Ovary (tissue), 10 donors: ENCODE measurements at regions of chr11 and their contacts with region 1.

Region 1: DNA sequence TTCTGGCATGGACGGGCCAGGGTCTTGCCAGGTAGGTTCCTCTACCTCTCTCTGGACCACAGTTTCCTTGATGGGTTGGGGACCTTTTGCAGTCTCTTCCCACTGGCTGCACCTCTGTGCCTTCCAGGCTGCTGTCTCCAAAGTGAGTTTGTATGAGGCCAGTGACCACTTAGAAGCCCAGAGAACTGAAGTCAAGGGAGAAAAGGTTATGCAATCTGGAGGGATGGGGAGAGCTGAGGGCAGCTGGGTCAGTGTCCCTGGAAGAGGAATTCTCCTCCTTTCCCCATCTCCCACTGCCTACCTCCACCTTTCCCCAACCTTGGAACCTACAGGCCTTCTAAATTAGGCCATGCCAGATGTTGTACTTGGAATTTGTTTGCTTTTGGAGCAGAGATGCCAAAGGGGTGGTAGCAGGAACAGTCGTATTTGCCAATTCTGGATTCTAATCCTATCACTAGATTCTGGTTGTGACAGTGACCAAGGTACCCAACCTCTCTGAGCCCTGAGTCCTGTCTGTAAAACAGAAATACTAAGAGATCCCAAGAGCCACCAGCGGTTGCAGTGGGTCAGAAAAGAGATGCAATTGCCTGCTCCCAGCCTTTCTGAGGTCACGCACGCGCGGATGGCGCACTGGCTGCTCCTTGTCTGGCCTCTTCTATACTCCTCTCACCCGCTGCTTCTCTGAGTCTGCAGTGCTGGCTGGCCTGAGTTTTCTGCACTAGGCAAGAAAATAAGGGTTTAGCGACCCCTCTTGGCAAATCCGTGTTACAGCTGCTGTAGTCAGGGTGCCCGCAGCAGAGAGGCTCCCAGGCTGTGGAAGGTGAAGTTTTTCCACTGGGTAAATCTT is 10.7 kb upstream of the ACCSL start:
- DNase-seq: peak; percentile 86 to 94 (median 89)
- H3K4me3 ChIP-seq: no peak overlapping the region
- H3K27ac ChIP-seq: peak overlapping the region; percentile 50 to 78
- H3K4me1 ChIP-seq: peaks cover 3% of the 10 kb centered on the region
- H3K27me3 ChIP-seq: no peaks in the 10 kb centered on the region
- CTCF ChIP-seq: peak; percentile 92 to 97 (median 93)
- EP300 ChIP-seq: no peak
- POLR2A ChIP-seq: peak; percentile 43

Region 2: DNA sequence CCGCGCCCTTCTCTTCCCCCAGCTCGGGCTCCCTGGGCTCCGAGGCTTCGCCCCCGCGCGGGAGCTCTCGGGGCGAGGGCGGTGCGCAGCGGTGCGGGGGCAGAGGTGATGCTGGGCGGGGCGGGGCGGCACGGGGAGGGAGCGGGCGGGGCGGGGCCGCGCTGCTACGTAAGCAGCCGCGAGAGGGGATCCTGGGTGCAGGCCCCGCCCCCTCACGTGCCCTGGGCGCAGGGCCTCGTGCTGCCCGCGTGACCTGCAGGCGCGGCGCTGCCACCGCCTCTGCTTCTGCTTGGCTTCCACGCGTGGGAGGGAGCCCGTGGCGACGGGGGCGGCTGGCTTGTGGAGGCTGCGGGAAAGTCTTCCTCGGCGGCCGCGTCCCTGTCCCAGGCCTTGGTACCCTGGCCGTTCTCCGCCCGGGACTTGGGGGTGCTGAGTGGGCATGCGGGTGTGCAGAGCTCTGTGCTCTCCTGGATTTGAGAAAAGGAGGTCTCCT is 489.1 kb before region 1 on chr11:
- intact Hi-C with region 1: loop called in 1 of 4 experiments (anchors 10 kb)
- DNase-seq: peak; percentile 88 to 92 (median 91)
- H3K4me3 ChIP-seq: peak overlapping the region; percentile 36
- H3K27ac ChIP-seq: peak overlapping the region; percentile 71 to 85
- H3K4me1 ChIP-seq: peaks cover 6% of the 10 kb centered on the region
- H3K27me3 ChIP-seq: no peaks in the 10 kb centered on the region
- CTCF ChIP-seq: no peak
- EP300 ChIP-seq: no peak
- POLR2A ChIP-seq: no peak

Region 3: GRCh38 chr11:43895601-43896000 is 141.4 kb before region 1 on chr11:
- intact Hi-C with region 1: loop called (anchors 2 kb)
- DNase-seq: no peak
- H3K4me3 ChIP-seq: no peak overlapping the region
- H3K27ac ChIP-seq: no peak overlapping the region
- H3K4me1 ChIP-seq: no peaks in the 10 kb centered on the region
- H3K27me3 ChIP-seq: no peaks in the 10 kb centered on the region
- CTCF ChIP-seq: no peak
- EP300 ChIP-seq: no peak
- POLR2A ChIP-seq: no peak

Region 4: DNA sequence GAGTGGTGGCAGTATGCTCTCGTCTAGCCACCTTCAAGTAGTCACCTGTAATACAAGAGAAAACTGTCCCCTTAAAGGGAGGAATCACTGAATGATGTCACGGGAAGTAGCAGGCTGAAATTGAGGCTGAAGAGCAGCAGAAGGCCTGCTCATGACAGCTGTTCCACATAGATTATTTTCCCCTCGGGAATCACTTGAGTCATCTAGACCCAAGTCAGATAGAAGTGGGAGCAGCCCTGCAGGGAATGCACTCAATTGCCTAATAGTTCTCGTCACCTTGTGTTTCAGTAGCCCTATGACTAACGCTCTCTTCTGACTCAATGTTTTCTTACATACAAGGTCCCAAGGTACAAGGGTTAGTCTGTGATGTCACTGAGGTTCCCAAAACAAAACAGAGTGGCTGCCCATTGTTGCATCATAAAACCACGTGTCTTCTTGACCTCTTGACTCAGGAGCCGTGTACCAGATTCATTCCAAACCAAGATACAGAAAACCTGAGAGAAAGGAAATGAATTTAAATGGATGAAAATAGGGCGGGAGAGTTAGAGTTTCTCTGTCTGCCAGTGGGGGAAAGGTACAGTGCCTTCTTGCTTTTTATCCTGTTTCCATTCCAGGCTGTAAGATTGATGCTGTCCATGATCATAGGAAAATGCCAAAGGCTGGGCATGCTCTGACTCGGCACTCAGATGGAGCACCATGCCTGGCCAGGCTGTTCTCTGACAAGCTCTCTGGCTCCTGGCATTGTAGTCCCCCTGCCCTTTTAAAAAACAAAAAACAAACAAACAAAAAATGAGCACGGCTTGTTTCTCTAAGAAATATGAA is 116.2 kb before region 1 on chr11:
- intact Hi-C with region 1: no loop called
- DNase-seq: peak; percentile 69 to 90 (median 75)
- H3K4me3 ChIP-seq: no peak overlapping the region
- H3K27ac ChIP-seq: peak overlapping the region; percentile 93 to 96
- H3K4me1 ChIP-seq: peaks cover 47% of the 10 kb centered on the region
- H3K27me3 ChIP-seq: no peaks in the 10 kb centered on the region
- CTCF ChIP-seq: no peak
- EP300 ChIP-seq: peak; percentile 100
- POLR2A ChIP-seq: no peak

Region 5: GRCh38 chr11:44143943-44144909 is 107.2 kb after region 1 on chr11:
- intact Hi-C with region 1: no loop called
- DNase-seq: no peak
- H3K4me3 ChIP-seq: no peak overlapping the region
- H3K27ac ChIP-seq: no peak overlapping the region
- H3K4me1 ChIP-seq: peaks cover 2% of the 10 kb centered on the region
- H3K27me3 ChIP-seq: no peaks in the 10 kb centered on the region
- CTCF ChIP-seq: no peak
- EP300 ChIP-seq: no peak
- POLR2A ChIP-seq: no peak